ENCODE measurements at regions of chr14 and their contacts with region 1.

Region 1: DNA sequence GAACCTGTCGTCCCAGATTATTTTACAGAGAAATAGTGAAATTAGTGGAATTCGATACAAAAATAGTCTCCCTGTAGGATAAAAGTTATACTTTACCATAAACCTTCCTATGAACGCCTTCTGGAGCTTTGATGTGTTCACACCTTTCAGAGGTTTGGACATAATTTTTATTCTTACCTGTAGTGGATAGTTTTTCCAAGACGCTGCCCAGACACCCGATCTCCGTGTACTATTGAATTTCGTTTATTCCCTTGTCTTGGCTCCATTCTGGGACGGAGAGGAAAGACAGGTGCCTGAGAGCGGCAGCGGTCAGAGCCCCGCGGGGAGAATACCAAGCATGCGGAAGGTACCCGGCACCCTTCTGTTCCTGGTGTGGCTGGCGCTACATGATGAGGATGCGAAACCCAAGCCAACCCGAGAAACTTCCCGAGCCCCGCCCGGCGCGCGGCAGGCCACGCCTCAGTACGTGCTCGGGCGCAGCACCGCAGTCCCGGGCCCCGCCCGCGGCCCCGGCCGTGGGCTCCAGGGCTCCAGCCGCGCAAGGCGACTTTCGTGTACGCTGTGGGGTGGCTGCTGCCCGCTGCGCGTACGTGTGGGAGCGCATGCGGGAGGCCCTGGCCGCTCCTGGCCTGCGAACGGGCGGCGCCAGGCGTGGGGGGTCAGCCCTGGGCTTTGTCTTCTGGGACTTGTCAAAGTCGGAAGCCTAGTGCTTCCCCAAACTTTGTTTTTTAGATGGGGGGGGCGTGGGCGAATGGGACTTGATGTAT is 11.3 kb upstream of the SNAPC1 start:
- DNase-seq: peak; percentile 88
- H3K4me3 Mint-ChIP-seq: peak overlapping the region; percentile 88
- H3K27ac Mint-ChIP-seq: peak overlapping the region; percentile 71
- H3K4me1 Mint-ChIP-seq: peaks cover 40% of the 10 kb centered on the region
- H3K27me3 Mint-ChIP-seq: peaks cover 6% of the 10 kb centered on the region

Region 2: GRCh38 chr14:61737915-61738314 is 13.0 kb before region 1 on chr14:
- CTCF ChIA-PET with region 1: interaction called, 3 read pairs
- POLR2A ChIA-PET with region 1: interaction called, 14 read pairs
- DNase-seq: no peak
- H3K4me3 Mint-ChIP-seq: no peak overlapping the region
- H3K27ac Mint-ChIP-seq: no peak overlapping the region
- H3K4me1 Mint-ChIP-seq: peaks cover 22% of the 10 kb centered on the region
- H3K27me3 Mint-ChIP-seq: no peaks in the 10 kb centered on the region

Region 3: GRCh38 chr14:61761959-61762786 is 11.3 kb after region 1 on chr14 and contains the start of gene SNAPC1:
- CTCF ChIA-PET with region 1: interaction called, 16 read pairs
- POLR2A ChIA-PET with region 1: interaction called, 34 read pairs
- DNase-seq: peak; percentile 98
- H3K4me3 Mint-ChIP-seq: peak within 1 kb of the TSS; percentile 98
- H3K27ac Mint-ChIP-seq: peak within 1 kb of the TSS; percentile 96
- H3K4me1 Mint-ChIP-seq: peaks cover 50% of the 10 kb centered on the region
- H3K27me3 Mint-ChIP-seq: peaks cover 4% of the 10 kb centered on the region
- total RNA-seq, gene SNAPC1: 5.5 to 6.0 TPM

Measured in activated CD4-positive, alpha-beta memory T cell treated with anti-CD3 and anti-CD28 coated beads, Interleukin-2, amount 10 ng/mL, durations not matched to agents 7 days and 5 days (primary cell).